Mammary epithelial cell (primary cell): ENCODE measurements at regions of chr12 and their contacts with region 1.

Region 1: DNA sequence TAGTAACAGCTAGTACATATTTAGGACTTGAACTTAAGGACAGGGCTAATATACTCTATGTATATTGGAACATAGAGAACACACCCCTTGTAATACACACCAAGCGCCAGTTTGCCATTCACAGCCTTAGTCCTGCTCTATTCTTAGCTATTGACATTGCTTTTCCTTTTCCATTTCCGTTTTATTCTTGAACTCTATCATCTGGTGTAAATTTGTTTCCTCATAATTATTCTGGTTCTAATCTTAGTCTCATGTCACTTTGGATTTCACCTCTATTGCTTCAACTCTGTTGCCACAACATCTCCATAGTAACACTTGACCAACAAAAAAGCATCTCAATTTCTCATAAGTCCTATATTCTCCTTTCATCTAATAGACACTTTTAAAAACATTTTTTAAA is 225.7 kb downstream of the PHLDA1 start:
- DNase-seq: no peak
- H3K4me3 ChIP-seq: no peak overlapping the region
- H3K27ac ChIP-seq: no peak overlapping the region
- H3K4me1 ChIP-seq: peaks cover 9% of the 10 kb centered on the region
- H3K27me3 ChIP-seq: no peaks in the 10 kb centered on the region
- CTCF ChIP-seq: no peak

Region 2: GRCh38 chr12:75651342-75651695 is 154.6 kb before region 1 on chr12:
- CTCF ChIA-PET with region 1: interaction called, 10 read pairs
- dilution Hi-C with region 1: no loop called
- in situ Hi-C with region 1: no loop called
- intact Hi-C with region 1: no loop called
- DNase-seq: peak; percentile 95
- H3K4me3 ChIP-seq: no peak overlapping the region
- H3K27ac ChIP-seq: peak overlapping the region; percentile 93
- H3K4me1 ChIP-seq: peaks cover 43% of the 10 kb centered on the region
- H3K27me3 ChIP-seq: no peaks in the 10 kb centered on the region
- CTCF ChIP-seq: no peak

Region 3: GRCh38 chr12:75981247-75982168 is 175.6 kb after region 1 on chr12:
- CTCF ChIA-PET with region 1: no interaction called
- dilution Hi-C with region 1: no loop called
- in situ Hi-C with region 1: no loop called
- intact Hi-C with region 1: no loop called
- DNase-seq: no peak
- H3K4me3 ChIP-seq: no peak overlapping the region
- H3K27ac ChIP-seq: no peak overlapping the region
- H3K4me1 ChIP-seq: peaks cover 38% of the 10 kb centered on the region
- H3K27me3 ChIP-seq: no peaks in the 10 kb centered on the region
- CTCF ChIP-seq: no peak